ENCODE measurements at regions of chr3 and their contacts with region 1.

Region 1: GRCh38 chr3:134425943-134426342 is 51.7 kb upstream of the AMOTL2 start:
- DNase-seq: no peak
- ATAC-seq: no peak
- H3K4me3 ChIP-seq: no peak overlapping the region
- H3K4me3 Mint-ChIP-seq: no peak overlapping the region
- H3K27ac ChIP-seq: no peak overlapping the region
- H3K27ac Mint-ChIP-seq: no peak overlapping the region
- H3K4me1 ChIP-seq: no peaks in the 10 kb centered on the region
- H3K4me1 Mint-ChIP-seq: no peaks in the 10 kb centered on the region
- H3K27me3 ChIP-seq: peaks cover 2 to 15% of the 10 kb centered on the region in 2 experiments
- H3K27me3 Mint-ChIP-seq: peaks cover 12 to 13% of the 10 kb centered on the region in 2 donors

Region 2: DNA sequence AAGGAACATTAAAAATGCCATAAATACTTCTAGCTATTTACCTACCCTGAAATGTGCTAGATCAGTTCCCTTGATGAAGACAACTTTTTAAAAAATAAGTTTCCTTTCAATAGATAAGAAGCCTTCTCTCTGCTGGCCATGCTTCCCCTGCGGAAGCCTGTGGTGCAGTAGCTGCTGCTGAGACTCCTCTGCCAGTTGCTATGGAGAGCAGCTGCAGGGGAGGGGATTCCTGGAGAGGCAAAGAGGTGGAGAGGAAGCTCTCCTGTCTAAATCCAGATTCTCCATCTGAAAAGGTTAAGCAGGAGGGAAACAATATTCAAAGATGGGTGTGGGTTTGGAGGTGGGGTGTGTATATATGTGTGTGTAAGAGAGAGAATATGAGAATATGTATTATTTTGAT is 1095.9 kb before region 1 on chr3:
- CTCF ChIA-PET with region 1: no interaction called
- POLR2A ChIA-PET with region 1: no interaction called
- DNase-seq: no peak
- ATAC-seq: no peak
- H3K4me3 ChIP-seq: no peak overlapping the region
- H3K4me3 Mint-ChIP-seq: no peak overlapping the region
- H3K27ac ChIP-seq: no peak overlapping the region
- H3K27ac Mint-ChIP-seq: no peak overlapping the region
- H3K4me1 ChIP-seq: no peaks in the 10 kb centered on the region
- H3K4me1 Mint-ChIP-seq: no peaks in the 10 kb centered on the region
- H3K27me3 ChIP-seq: no peaks in the 10 kb centered on the region
- H3K27me3 Mint-ChIP-seq: peaks cover 0 to 11% of the 10 kb centered on the region in 2 donors

Region 3: GRCh38 chr3:134359121-134360010 is 66.6 kb before region 1 on chr3:
- CTCF ChIA-PET with region 1: no interaction called
- POLR2A ChIA-PET with region 1: interaction called in 1 of 2 experiments, 10 read pairs
- DNase-seq: no peak
- ATAC-seq: no peak
- H3K4me3 ChIP-seq: no peak overlapping the region
- H3K4me3 Mint-ChIP-seq: no peak overlapping the region
- H3K27ac ChIP-seq: no peak overlapping the region
- H3K27ac Mint-ChIP-seq: no peak overlapping the region
- H3K4me1 ChIP-seq: peaks cover 6 to 13% of the 10 kb centered on the region in 2 experiments
- H3K4me1 Mint-ChIP-seq: peaks cover 10 to 11% (median 11%) of the 10 kb centered on the region in 3 donors
- H3K27me3 ChIP-seq: peaks cover 0 to 23% of the 10 kb centered on the region in 2 experiments
- H3K27me3 Mint-ChIP-seq: no peaks in the 10 kb centered on the region

Region 4: DNA sequence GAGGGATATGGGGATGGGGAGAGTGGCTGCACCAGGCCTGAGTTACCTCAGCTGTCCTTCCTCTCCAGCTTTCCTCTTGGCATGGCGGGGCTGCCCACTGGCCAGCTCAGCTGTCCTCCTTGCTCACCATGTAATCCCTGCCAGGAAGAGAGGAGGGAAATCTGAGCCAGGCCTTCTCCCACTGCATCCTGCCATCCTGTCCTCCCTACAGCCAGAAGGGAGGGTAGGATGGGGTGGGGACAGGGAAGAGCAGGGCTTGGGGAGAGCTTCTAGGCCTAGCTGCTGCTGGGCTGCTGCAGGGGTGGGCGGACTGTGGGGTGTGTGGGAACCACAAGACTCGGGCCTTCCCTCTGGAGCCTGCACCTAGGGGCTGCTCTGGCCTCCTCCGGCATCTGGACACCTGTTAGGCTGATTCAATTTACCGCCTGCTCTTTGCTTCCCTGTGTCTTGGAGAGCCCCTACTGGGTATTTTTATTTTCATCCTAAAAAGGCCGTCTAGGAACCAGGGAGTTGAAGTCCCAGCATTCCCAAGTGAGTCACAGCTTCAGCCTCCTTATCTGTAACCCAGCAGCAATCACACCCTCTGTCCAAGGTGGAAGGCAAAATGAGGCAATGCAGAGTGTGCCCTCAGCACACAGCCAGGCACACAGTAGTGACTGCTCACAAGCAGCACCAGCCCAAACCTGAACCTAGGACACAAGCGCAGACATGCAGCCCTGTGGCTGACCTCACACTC is 237.9 kb after region 1 on chr3:
- CTCF ChIA-PET with region 1: no interaction called
- POLR2A ChIA-PET with region 1: no interaction called
- DNase-seq: no peak
- ATAC-seq: peak in 1 of 4 experiments; percentile 18
- H3K4me3 ChIP-seq: no peak overlapping the region
- H3K4me3 Mint-ChIP-seq: no peak overlapping the region
- H3K27ac ChIP-seq: no peak overlapping the region
- H3K27ac Mint-ChIP-seq: no peak overlapping the region
- H3K4me1 ChIP-seq: no peaks in the 10 kb centered on the region
- H3K4me1 Mint-ChIP-seq: no peaks in the 10 kb centered on the region
- H3K27me3 ChIP-seq: peaks cover 0 to 14% of the 10 kb centered on the region in 2 experiments
- H3K27me3 Mint-ChIP-seq: peaks cover 6 to 12% of the 10 kb centered on the region in 2 donors